GM10248 (cell line): ENCODE measurements at regions of chr5 and their contacts with region 1.

Region 1: DNA sequence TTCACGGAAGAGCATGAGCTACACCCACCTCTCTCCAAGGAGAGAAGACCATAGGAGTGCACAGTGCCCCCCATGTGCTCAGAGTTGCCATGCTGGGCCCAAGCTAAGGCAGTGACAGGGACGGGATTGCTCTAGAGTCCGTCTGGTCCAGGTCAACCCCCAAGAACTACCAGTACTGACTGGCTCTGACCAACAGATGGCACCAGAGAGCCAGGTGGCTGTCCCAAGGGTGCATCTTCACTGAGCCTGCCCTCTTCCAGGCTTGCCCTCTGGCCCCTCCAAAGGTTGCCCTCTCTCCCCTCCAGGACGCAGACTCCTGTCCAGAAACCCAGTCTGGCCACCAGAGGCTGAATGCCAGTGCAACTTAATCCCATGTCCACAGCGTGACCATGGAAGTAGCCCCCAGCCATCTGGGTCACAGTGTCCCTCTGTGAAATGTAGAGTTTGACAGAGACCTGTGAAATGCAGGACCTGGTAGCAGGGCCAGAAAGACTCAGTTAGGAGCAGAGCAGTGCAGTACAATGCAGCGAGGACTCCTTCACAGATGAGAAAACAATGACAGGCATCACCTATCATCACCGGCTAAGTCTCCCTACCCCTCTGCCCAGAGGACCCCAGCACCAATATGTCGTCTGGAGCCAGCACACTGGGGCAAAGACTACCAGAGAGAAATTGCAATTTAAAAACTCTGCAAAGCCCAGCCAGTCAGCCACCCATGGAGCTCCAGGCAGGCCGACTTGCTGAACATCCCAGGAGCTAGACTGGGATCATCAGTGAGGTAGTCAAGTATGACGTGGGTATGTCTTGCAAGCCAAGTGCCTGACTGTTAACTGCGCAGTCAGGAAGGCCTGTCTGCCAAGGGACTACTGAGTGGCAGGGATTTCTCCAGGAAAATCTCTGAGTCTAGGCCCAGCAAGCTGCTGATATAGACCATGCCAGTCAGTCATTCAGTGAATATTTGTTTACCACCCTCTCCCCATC is 7.7 kb upstream of the SKP1 start:
- DNase-seq: peak; percentile 84
- CTCF ChIP-seq: peak; percentile 93

Region 2: DNA sequence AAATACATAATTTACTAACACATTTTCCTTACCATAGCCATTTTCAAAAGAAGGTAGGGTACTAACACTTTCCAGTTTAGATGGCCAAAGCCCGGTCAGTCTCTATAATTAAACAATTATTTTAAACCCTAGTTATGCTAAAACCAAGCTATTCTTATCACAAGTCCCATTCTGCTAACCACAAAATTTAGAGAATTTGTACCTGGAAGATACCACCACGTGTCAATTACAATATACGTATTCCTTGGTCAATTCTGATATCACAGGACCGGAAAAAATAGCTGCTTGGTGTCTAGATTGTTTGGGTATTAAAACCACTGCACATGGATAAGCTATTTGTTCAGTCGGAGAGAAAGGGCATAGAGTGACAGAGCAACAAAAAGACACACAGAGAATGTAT is 11.2 kb after region 1 on chr5:
- CTCF ChIA-PET with region 1: interaction called, 38 read pairs
- POLR2A ChIA-PET with region 1: interaction called, 5 read pairs
- DNase-seq: no peak
- CTCF ChIP-seq: no peak

Region 3: DNA sequence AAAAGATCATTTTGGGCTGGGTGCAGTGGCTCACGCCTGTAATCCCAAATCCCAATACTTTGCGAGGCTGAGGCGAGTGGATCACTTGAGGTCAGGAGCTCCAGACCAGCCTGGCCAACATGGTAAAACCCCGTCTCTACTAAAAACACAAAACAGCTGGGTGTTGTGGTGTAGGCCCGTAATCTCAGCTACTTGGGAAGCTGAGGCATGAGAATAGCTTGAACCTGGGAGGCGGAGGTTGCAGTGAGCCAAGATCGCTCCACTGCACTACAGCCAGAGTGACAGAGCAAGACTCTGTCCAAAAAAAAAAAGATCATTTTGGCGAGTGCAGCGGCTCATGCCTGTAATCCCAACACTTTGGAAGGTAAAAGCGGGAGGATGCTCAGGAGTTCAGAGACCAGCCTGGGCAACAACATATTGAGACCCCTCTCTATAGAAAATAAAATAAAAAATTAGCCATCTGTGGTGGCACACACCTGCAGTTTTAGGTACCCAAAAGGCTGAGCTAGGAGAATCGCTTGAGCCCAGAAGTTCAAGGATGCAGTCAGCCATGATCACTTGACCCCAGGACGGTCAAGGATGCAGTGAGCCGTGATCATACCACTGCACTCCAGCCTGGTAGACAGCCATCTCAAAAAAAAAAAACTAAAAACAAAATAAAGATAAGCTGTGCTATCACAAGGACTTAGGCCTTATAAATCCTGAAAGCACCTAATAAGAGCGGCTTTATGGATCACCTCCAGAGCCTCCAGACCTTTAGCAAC is 25.2 kb after region 1 on chr5:
- CTCF ChIA-PET with region 1: interaction called, 10 read pairs
- POLR2A ChIA-PET with region 1: no interaction called
- DNase-seq: no peak
- CTCF ChIP-seq: no peak

Region 4: GRCh38 chr5:134225618-134226440 is 41.4 kb after region 1 on chr5 and contains the start of gene PPP2CA:
- CTCF ChIA-PET with region 1: interaction called, 24 read pairs
- POLR2A ChIA-PET with region 1: no interaction called
- DNase-seq: peak; percentile 97
- CTCF ChIP-seq: no peak

Region 5: GRCh38 chr5:134275822-134276221 is 91.4 kb after region 1 on chr5:
- CTCF ChIA-PET with region 1: interaction called, 16 read pairs
- POLR2A ChIA-PET with region 1: no interaction called
- DNase-seq: peak; percentile 25
- CTCF ChIP-seq: no peak

Region 6: DNA sequence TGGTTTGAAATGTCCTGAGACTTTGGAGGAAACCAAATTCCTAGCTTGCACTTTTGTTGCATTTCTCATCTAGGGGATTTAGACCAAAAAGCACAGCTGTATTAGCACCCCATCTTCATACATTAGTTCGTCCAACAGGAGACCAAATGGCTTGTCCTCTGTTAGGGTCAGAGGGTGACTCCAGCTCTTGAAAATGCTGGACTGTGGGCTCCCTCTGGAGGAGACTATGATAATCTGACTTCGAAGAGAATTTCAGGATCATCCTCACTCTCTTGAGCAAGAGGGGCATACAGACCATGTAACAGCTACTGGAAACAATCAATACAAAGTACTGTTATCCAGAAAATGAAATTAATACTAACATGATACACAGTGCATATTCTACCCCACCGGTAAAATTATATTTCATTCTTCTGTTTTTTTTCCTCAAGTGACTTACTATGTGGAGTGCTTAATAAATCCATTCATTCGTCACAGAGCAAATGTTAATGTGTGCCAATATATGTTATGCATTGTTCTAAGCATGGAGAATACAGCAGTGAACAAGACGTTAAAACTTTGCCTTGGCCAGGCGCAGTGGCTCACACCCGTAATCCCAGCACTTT is 105.2 kb after region 1 on chr5:
- CTCF ChIA-PET with region 1: interaction called, 139 read pairs
- POLR2A ChIA-PET with region 1: no interaction called
- DNase-seq: peak; percentile 62
- CTCF ChIP-seq: peak; percentile 56

Region 7: DNA sequence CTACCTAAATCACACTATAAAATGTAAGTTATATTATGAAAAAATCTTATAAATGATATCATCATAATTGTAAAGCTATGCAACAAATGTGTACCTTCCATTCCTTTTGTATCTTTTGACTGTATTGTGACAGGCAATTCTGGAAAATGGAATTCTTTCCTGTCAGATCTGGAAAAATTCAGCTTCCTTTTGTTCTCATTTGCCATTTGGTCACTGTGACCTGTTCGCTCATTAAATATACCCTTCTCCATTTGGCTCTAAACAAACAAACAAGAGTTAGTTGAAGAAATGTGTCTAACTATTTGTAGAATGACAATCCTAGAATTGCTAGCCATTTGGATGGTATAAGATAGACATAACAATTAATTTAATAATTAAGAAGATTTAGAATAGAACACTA is 119.9 kb after region 1 on chr5:
- CTCF ChIA-PET with region 1: interaction called, 10 read pairs
- POLR2A ChIA-PET with region 1: no interaction called
- DNase-seq: no peak
- CTCF ChIP-seq: no peak

Region 8: DNA sequence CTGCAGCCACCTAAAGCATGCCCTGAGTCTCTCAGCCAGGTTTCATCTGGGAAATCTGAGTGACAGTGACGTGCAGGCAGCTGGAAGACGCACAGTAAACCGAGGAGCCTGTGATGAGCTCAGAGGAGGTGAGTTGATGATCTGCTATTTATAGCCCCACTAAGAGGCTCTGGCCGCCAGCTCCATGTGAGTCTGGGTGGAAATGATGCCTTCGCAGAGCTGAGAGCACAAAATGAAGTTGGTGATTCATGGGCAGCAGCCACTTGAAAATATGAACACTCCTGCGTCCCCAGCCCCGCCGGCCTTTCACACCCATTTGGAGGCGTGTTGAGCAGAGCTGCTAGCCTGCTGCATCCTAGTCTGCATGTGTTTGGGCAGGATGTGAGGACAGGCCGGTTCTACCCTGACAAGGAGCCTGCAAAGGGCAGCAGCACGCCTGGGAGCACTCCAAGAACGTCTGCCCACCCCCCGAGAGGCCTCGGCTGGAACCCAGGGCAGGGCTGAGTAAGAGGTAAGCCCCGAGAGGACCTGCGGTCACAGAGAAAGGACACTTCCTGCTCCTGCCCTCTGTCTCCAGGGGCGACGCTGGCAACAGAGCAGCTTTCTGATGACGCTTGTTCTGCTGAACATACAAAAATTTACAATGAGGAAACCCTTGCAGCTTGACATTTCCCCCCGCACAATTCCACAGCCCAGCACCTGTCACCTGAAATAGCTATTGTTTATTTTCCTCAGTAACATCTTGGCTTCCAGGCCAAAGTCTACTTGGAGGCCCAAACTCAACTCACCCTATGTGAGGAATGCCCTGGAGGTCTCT is 252.3 kb after region 1 on chr5:
- CTCF ChIA-PET with region 1: no interaction called
- POLR2A ChIA-PET with region 1: no interaction called
- DNase-seq: peak; percentile 74
- CTCF ChIP-seq: no peak